Caki2 (cell line): ENCODE measurements at regions of chr10 and their contacts with region 1.

Region 1: DNA sequence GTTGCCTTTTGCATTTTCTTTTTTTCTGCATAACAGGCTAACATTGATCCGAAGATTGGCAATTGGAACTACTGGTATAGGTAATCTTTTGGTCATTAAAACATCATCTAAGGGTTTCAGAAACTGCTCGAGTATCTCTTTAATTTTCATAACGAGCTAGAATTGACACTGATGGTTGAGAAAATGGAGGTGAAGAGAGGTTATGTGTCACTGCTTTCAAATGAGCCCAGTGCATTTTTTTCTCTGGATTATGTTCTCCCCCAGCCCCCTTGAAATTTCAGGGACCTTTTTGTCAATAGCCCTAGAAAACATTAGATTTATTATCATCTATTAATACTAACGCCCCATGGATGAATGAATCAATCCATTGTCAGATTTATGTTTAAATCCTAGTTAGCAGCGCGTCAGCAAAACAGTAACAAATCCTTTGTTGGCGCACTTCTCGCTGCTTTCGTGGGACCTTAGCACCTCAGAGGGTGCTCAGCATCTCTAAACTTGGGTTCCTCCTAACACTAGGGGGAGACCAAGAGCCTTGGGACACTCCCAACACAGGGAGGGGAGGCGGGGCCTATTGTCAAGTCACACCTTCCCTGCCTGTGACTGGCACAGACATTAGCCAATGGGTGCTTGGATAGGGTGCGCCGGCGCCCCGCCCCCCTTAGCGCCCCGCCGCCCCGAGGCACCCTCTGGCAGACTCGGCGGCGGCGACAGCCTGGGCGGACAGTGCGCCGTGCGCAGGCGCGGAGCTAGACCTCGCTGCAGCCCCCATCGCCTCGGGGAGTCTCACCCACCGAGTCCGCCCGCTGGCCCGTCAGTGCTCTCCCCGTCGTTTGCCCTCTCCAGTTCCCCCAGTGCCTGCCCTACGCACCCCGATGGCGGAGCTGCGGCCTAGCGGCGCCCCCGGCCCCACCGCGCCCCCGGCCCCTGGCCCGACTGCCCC is at the start of gene SUFU:
- DNase-seq: peak; percentile 94
- total RNA-seq, gene SUFU: 0.84 and 2.9 TPM in 2 replicates

Region 2: GRCh38 chr10:102175415-102175814 is 328.1 kb before region 1 on chr10:
- in situ Hi-C with region 1: loop called (anchors 10 kb)
- DNase-seq: no peak

Region 3: DNA sequence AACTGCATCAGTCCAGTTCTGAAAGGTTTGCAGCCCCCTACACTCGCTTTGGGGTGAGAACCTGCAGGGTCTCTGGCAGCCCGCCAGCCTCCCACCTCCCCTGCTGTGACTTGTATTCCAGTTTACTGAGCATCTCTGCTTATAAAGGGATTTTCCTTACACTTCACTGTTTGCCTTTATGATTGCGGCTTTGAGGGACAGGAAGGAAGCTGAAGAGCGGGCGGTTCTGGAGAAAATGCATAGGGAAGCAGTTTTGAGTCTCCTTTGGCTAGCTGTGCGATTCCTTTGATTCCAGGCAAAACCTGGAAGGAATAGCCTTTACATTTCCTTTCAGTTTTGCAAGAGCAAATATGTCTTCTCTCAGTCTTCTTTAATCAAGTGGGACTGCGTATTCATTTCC is 75.8 kb after region 1 on chr10:
- in situ Hi-C with region 1: loop called (anchors 10 kb)
- DNase-seq: no peak